GM10248 (cell line): ENCODE measurements at regions of chr14 and their contacts with region 1.

Region 1: DNA sequence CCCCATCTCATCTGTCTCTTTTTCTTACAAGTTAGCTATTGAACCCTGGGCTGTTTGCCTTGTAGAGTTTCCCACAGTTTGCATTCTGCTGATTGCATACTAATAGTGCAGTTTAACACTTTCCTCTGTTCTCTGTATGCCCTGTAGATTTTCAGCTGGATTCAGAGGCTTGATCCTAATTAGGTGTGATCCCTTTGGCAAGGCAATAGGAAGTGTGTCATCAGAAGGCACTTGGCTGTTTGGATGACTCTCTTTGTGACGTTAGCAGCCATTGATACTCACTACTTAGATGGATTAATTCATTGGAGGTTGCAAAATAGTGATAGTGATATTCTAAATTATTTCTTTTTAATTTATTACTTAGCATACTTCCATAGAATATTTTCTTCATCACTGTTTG is 33.6 kb downstream of the FUT8 start:
- DNase-seq: no peak
- CTCF ChIP-seq: no peak

Region 2: DNA sequence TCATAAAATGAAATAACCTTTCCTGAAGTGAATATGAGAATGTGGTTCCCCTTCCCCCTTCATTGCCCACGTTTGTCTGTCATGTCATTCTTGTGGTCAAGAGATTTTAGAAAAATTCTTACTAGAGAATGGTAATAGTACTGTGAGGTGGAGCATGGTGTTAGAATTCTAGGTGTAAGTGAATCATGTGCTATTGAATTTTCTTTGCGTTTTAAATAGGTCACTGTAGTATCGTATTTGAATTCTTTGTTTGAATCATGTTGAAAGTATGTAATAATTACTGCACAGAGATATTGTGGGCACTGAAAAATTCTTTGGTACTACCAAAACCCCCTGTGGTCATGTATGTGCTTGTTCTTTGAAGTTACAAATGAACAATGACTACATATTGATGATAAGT is 16.3 kb after region 1 on chr14:
- CTCF ChIA-PET with region 1: interaction called, 14 read pairs
- POLR2A ChIA-PET with region 1: no interaction called
- DNase-seq: peak; percentile 55
- CTCF ChIP-seq: no peak

Region 3: GRCh38 chr14:65496178-65496993 is 50.2 kb after region 1 on chr14:
- CTCF ChIA-PET with region 1: no interaction called
- POLR2A ChIA-PET with region 1: no interaction called
- DNase-seq: no peak
- CTCF ChIP-seq: no peak

Region 4: GRCh38 chr14:65718629-65719028 is 272.5 kb after region 1 on chr14:
- CTCF ChIA-PET with region 1: no interaction called
- POLR2A ChIA-PET with region 1: interaction called, 10 read pairs
- DNase-seq: no peak
- CTCF ChIP-seq: no peak

Region 5: DNA sequence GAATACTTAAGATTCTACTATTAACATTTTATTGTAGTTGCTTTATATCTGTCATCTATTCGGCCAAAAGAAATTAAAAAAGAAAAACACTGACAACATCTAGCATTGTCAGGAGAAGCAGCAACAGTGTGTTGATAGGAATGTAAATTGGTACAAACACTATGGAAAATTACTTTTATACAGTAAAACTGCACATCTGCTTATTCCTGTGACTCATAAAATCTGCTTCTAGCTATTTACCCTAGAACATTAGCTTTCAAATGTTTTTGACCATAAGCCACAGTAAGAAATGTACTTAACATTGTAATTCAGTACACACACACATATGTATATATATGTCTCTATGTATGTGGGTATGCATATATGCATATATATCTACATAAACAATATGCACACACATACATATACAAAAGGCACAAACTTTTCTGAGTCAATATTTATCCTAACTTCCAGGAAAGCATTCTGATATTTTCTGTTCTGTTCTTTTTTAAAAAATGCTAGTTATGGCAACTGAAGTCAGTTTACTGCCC is 1464.2 kb after region 1 on chr14:
- CTCF ChIA-PET with region 1: no interaction called
- POLR2A ChIA-PET with region 1: no interaction called
- DNase-seq: no peak
- CTCF ChIP-seq: no peak